GM12878 (cell line): ENCODE measurements at regions of chr5 and their contacts with region 1.

Region 1: GRCh38 chr5:149680810-149681221 is 49.3 kb upstream of the PPARGC1B start:
- DNase-seq: peak; percentile 84
- ATAC-seq: peak; percentile 99
- H3K4me3 ChIP-seq: no peak overlapping the region
- H3K27ac ChIP-seq: peak overlapping the region; percentile 45
- H3K4me1 ChIP-seq: peaks cover 28% of the 10 kb centered on the region
- H3K27me3 ChIP-seq: peaks cover 0 to under 1% of the 10 kb centered on the region in 2 experiments; a peak in 1 of 4 replicates
- CTCF ChIP-seq: no peak
- EP300 ChIP-seq: peak; percentile 32 to 90; a peak in 3 of 4 replicates
- POLR2A ChIP-seq: no peak
- RAD21 ChIP-seq: no peak

Region 2: GRCh38 chr5:149646564-149646963 is 34.3 kb before region 1 on chr5:
- CTCF ChIA-PET with region 1: no interaction called
- POLR2A ChIA-PET with region 1: no interaction called
- RAD21 ChIA-PET with region 1: no interaction called
- SMC1A ChIA-PET with region 1: no interaction called
- in situ Hi-C with region 1: no loop called
- intact Hi-C with region 1: no loop called
- DNase-seq: no peak
- ATAC-seq: no peak
- H3K4me3 ChIP-seq: no peak overlapping the region
- H3K27ac ChIP-seq: no peak overlapping the region
- H3K4me1 ChIP-seq: no peaks in the 10 kb centered on the region
- H3K27me3 ChIP-seq: no peaks in the 10 kb centered on the region
- CTCF ChIP-seq: no peak
- EP300 ChIP-seq: no peak
- POLR2A ChIP-seq: no peak
- RAD21 ChIP-seq: no peak

Region 3: DNA sequence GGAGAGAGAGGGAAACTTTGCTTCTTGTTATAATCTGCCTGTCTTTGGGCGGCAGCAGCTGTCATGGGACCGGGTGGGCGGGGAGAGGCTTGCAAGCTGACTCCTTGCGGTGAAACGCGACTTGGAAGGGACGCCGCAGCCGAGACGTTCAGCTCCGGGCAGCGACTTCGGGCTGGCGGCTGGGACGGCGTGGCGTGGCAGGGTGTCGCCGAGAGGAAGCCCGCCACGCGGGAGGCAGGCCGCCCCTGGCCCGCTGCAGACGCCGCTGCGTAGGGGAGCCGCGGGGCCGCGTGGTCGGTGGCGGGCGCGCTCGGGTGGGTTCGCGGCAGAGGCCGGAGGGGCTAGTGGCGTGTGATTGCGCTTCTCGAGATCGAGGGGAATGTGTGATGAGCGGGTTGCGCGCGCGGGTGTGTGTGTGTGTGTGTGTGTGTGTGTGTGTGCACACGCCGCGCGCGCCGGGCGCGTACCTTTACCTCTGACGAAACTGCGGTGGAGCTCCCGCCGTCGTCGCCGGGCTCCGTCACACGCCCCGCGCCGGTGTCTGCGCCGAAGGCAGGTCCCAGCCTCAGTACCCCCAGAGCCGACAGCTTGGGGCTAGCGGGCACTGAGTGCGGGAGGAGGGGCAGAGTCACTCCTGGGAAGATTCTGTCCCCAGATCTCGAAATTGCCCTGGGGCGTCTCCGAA is 51.0 kb after region 1 on chr5:
- CTCF ChIA-PET with region 1: interaction called, 3 read pairs
- POLR2A ChIA-PET with region 1: interaction called, 6 read pairs
- RAD21 ChIA-PET with region 1: interaction called, 9 read pairs
- SMC1A ChIA-PET with region 1: interaction called, 3 read pairs
- in situ Hi-C with region 1: no loop called
- intact Hi-C with region 1: loop called (anchors 1 kb)
- DNase-seq: peak; percentile 62
- ATAC-seq: peak; percentile 77
- H3K4me3 ChIP-seq: peak overlapping the region; percentile 100
- H3K27ac ChIP-seq: peak overlapping the region; percentile 82
- H3K4me1 ChIP-seq: no peaks in the 10 kb centered on the region; the same call in 1 of the 2 replicates
- H3K27me3 ChIP-seq: no peaks in the 10 kb centered on the region
- CTCF ChIP-seq: no peak
- EP300 ChIP-seq: no peak
- POLR2A ChIP-seq: peak; percentile 77
- RAD21 ChIP-seq: no peak

Region 4: GRCh38 chr5:150836703-150837102 is 1155.9 kb after region 1 on chr5:
- CTCF ChIA-PET with region 1: no interaction called
- POLR2A ChIA-PET with region 1: no interaction called
- RAD21 ChIA-PET with region 1: no interaction called
- SMC1A ChIA-PET with region 1: no interaction called
- in situ Hi-C with region 1: no loop called
- intact Hi-C with region 1: no loop called
- DNase-seq: no peak
- ATAC-seq: no peak
- H3K4me3 ChIP-seq: no peak overlapping the region
- H3K27ac ChIP-seq: no peak overlapping the region
- H3K4me1 ChIP-seq: no peaks in the 10 kb centered on the region
- H3K27me3 ChIP-seq: no peaks in the 10 kb centered on the region
- CTCF ChIP-seq: no peak
- EP300 ChIP-seq: no peak
- POLR2A ChIP-seq: no peak
- RAD21 ChIP-seq: no peak